Dendritic cell treated with granulocyte-macrophage colony-stimulating factor and Interleukin-4, amounts not matched to agents 40 ng/mL and 50 ng/mL, for 4 days (primary cell): ENCODE measurements at regions of chr2 and their contacts with region 1.

Region 1: DNA sequence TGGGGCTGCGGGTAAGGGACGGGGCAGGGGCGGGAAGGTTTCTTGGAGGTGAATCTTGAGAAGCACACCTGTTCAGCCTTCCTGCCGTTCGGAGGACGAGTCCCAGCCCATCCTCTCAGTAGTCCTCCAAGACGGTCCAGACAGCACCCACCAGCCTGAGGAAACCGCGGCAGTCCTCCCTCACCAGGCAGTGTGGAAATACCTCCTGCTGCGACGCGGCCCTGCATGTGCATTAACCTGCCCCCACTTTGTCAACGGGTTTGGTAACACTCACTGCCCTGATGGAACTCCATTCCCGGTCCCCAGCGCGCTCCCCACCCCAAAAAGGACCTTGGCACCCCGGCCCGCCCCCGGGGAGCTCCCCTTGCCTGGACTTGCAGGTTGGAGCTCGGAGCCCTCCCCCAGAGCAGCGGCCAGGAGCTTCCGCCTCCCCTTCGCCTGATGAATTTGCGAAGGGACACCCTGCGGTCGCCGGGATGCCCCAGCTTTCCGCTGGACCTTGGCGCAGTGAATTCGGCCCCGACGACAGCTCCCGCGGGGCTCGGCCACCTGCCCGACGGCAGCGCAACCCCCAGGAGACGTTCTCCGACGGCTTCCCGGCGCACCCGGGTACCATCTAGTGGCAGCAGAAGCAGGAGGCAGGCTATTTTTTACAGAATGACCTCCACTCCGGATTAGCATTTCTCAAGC is 31.5 kb downstream of the ACVR1C start:
- H3K4me3 Mint-ChIP-seq: peak overlapping the region; percentile 63
- H3K27ac Mint-ChIP-seq: no peak overlapping the region
- H3K4me1 Mint-ChIP-seq: peaks cover 7% of the 10 kb centered on the region
- H3K27me3 Mint-ChIP-seq: peaks cover 18% of the 10 kb centered on the region

Region 2: GRCh38 chr2:157302492-157303099 is 294.5 kb before region 1 on chr2:
- intact Hi-C with region 1: loop called (anchors 2 kb)
- H3K4me3 Mint-ChIP-seq: no peak overlapping the region
- H3K27ac Mint-ChIP-seq: no peak overlapping the region
- H3K4me1 Mint-ChIP-seq: peaks cover 5% of the 10 kb centered on the region
- H3K27me3 Mint-ChIP-seq: peaks cover 5% of the 10 kb centered on the region

Region 3: DNA sequence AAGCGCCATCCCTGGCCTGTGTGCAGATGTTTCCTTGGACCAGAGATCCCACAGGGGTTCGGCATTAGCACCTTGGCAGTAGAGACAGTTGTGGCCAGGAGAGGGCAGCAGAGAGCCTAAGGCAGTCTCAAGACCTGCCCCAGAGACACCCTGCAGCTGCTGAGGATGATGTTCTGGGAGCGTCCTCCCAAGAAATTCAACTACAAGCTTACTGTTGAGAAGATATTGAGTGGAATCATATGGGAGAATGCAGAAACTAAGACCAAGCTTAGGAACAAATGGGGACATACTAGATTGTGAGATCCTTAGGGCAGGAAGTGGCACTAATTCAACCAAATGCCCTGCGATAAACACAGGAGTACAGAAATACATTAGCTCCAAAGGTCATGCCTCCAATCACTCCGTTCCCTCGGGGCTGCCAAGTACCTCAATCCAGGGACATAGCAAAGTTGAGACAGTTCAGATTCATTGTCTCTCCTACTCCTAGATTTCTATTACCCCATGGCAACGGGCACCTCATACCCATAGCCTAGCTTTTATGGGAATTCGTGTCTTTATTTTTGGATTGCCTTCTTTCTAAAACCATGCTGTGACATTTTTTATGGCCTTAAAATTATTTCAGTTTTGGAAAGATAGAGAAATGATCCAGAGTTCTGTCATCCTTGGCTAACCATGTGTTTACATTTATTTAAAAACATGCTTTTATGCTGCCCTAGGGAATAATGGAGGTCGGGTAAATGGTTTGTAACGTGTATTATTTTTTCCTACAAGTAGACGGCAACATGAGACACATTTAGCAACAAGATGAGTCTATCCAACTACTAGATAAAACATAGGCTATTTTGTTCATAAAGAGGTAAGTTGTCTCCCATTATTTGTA is 269.3 kb before region 1 on chr2:
- intact Hi-C with region 1: loop called (anchors 2 kb)
- H3K4me3 Mint-ChIP-seq: no peak overlapping the region
- H3K27ac Mint-ChIP-seq: no peak overlapping the region
- H3K4me1 Mint-ChIP-seq: peaks cover 12% of the 10 kb centered on the region
- H3K27me3 Mint-ChIP-seq: no peaks in the 10 kb centered on the region

Region 4: DNA sequence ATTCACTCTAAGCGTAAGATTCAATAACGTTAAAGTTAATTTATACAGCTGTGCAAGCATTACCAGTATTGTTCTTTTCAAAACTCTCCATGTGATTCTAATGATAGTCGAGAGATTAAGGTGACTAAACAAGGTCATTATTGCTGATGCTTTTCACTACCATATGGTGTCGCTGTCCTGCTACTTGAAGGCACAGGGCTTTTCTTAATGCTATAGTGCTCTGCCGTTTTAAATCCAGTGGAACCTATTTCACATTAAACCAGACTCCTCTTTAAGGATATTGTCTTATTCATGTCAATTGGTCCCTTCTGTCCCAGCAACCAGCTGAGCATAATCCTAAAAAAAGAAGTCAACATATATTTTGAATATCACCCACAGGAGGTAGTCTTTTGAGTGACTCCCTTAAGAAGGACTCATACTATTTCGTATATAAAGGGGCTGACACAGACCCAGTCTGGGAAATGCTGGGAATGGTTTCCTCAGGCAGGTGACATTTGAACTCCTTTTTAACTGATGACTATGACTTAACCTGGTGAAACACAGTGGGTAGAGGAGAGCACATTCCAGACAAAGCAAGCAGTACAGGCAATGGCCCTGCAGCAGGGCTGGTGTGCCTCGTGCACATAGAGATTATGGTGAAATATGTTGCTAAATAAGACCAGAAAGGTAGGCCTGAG is 99.4 kb before region 1 on chr2:
- intact Hi-C with region 1: loop called (anchors 5 kb)
- H3K4me3 Mint-ChIP-seq: no peak overlapping the region
- H3K27ac Mint-ChIP-seq: no peak overlapping the region
- H3K4me1 Mint-ChIP-seq: peaks cover 34% of the 10 kb centered on the region
- H3K27me3 Mint-ChIP-seq: no peaks in the 10 kb centered on the region

Region 5: GRCh38 chr2:157509744-157510143 is 87.4 kb before region 1 on chr2:
- intact Hi-C with region 1: loop called (anchors 5 kb)
- H3K4me3 Mint-ChIP-seq: no peak overlapping the region
- H3K27ac Mint-ChIP-seq: no peak overlapping the region
- H3K4me1 Mint-ChIP-seq: peaks cover 6% of the 10 kb centered on the region
- H3K27me3 Mint-ChIP-seq: no peaks in the 10 kb centered on the region

Region 6: GRCh38 chr2:157761520-157761919 is 164.4 kb after region 1 on chr2:
- intact Hi-C with region 1: no loop called
- H3K4me3 Mint-ChIP-seq: no peak overlapping the region
- H3K27ac Mint-ChIP-seq: no peak overlapping the region
- H3K4me1 Mint-ChIP-seq: no peaks in the 10 kb centered on the region
- H3K27me3 Mint-ChIP-seq: no peaks in the 10 kb centered on the region